Panc1 (cell line): ENCODE measurements at regions of chr12 and their contacts with region 1.

Region 1: GRCh38 chr12:27305673-27306456 is 26.8 kb upstream of the BMAL2 start:
- DNase-seq: no peak
- ATAC-seq: no peak
- H3K4me3 ChIP-seq: no peak overlapping the region
- H3K27ac ChIP-seq: no peak overlapping the region
- H3K4me1 ChIP-seq: no peaks in the 10 kb centered on the region
- H3K27me3 ChIP-seq: no peaks in the 10 kb centered on the region
- CTCF ChIP-seq: peak; percentile 56; the same call in 1 of the 2 replicates

Region 2: GRCh38 chr12:27034607-27035293 is 271.1 kb before region 1 on chr12:
- CTCF ChIA-PET with region 1: no interaction called
- POLR2A ChIA-PET with region 1: no interaction called
- in situ Hi-C with region 1: no loop called
- intact Hi-C with region 1: loop called (anchors 5 kb)
- DNase-seq: no peak
- ATAC-seq: no peak
- H3K4me3 ChIP-seq: no peak overlapping the region
- H3K27ac ChIP-seq: no peak overlapping the region
- H3K4me1 ChIP-seq: no peaks in the 10 kb centered on the region
- H3K27me3 ChIP-seq: no peaks in the 10 kb centered on the region
- CTCF ChIP-seq: no peak

Region 3: GRCh38 chr12:27142101-27142721 is 163.7 kb before region 1 on chr12:
- CTCF ChIA-PET with region 1: interaction called, 6 read pairs
- POLR2A ChIA-PET with region 1: no interaction called
- in situ Hi-C with region 1: no loop called
- intact Hi-C with region 1: loop called (anchors 5 kb)
- DNase-seq: peak; percentile 81
- ATAC-seq: peak; percentile 100
- H3K4me3 ChIP-seq: no peak overlapping the region
- H3K27ac ChIP-seq: no peak overlapping the region
- H3K4me1 ChIP-seq: no peaks in the 10 kb centered on the region
- H3K27me3 ChIP-seq: no peaks in the 10 kb centered on the region
- CTCF ChIP-seq: peak; percentile 96